SK-N-SH (cell line): ENCODE measurements at regions of chr15 and their contacts with region 1.

Region 1: GRCh38 chr15:88904624-88905327 is 8.4 kb downstream of the MFGE8 start:
- DNase-seq: peak; percentile 84
- H3K4me3 ChIP-seq: no peak overlapping the region; a peak in 1 of 4 replicates
- H3K27ac ChIP-seq: no peak overlapping the region
- H3K4me1 ChIP-seq: no peaks in the 10 kb centered on the region; a peak in 1 of 4 replicates
- H3K27me3 ChIP-seq: no peaks in the 10 kb centered on the region
- CTCF ChIP-seq: peak; percentile 98
- EP300 ChIP-seq: no peak
- RAD21 ChIP-seq: peak; percentile 88

Region 2: GRCh38 chr15:88348579-88349230 is 556.1 kb before region 1 on chr15:
- CTCF ChIA-PET with region 1: no interaction called
- POLR2A ChIA-PET with region 1: no interaction called
- DNase-seq: no peak
- H3K4me3 ChIP-seq: no peak overlapping the region
- H3K27ac ChIP-seq: no peak overlapping the region
- H3K4me1 ChIP-seq: peaks cover 0 to 3% of the 10 kb centered on the region in 2 experiments; a peak in 2 of 4 replicates
- H3K27me3 ChIP-seq: no peaks in the 10 kb centered on the region
- CTCF ChIP-seq: no peak
- EP300 ChIP-seq: no peak
- RAD21 ChIP-seq: no peak

Region 3: GRCh38 chr15:88878720-88879184 is 26.0 kb before region 1 on chr15:
- CTCF ChIA-PET with region 1: interaction called, 11 read pairs
- POLR2A ChIA-PET with region 1: no interaction called
- DNase-seq: peak; percentile 85
- H3K4me3 ChIP-seq: no peak overlapping the region
- H3K27ac ChIP-seq: no peak overlapping the region
- H3K4me1 ChIP-seq: no peaks in the 10 kb centered on the region
- H3K27me3 ChIP-seq: no peaks in the 10 kb centered on the region; the same call in 1 of the 2 replicates
- CTCF ChIP-seq: peak; percentile 73
- EP300 ChIP-seq: no peak
- RAD21 ChIP-seq: peak; percentile 66

Region 4: GRCh38 chr15:88920186-88920891 is 15.6 kb after region 1 on chr15:
- CTCF ChIA-PET with region 1: interaction called, 18 read pairs
- POLR2A ChIA-PET with region 1: no interaction called
- DNase-seq: no peak
- H3K4me3 ChIP-seq: no peak overlapping the region
- H3K27ac ChIP-seq: peak overlapping the region in 1 of 2 experiments; percentile 51; a peak in 1 of 4 replicates
- H3K4me1 ChIP-seq: peaks cover 0 to 12% of the 10 kb centered on the region in 2 experiments; a peak in 1 of 4 replicates
- H3K27me3 ChIP-seq: no peaks in the 10 kb centered on the region
- CTCF ChIP-seq: no peak
- EP300 ChIP-seq: no peak
- RAD21 ChIP-seq: no peak

Region 5: DNA sequence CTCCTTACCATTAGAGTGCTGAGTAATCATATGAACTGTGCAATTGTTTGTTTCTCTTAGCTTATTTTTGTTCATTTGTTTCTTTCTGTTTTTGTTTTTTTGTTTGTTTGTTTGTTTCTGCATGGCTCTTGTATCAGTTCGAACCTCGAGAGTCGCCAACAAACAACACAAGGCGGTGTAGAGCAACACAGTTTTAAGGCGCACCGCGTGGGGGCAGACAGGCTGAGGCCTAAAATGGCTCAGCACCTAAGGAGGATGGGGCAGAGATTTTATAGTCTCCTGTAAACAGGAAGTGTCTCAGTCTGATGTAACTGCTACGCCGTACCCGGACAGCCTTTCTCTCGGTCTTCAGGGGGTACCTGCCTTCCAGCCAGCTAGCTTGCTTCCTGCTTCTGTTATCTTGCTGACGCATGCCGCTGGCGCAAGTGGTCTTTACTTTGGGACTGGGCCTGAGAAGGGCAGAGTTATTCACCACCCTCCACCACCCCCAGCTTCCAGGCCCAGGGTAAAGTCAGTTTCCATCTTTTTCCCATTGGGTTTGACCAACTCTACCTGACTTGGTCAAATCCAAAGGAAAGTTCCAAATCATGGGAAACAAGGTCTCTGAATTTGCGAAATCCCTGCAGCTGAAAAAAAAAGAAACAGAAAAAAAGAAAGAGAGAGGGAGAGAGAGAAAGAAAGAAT is 34.2 kb after region 1 on chr15:
- CTCF ChIA-PET with region 1: interaction called, 10 read pairs
- POLR2A ChIA-PET with region 1: no interaction called
- DNase-seq: no peak
- H3K4me3 ChIP-seq: no peak overlapping the region
- H3K27ac ChIP-seq: no peak overlapping the region
- H3K4me1 ChIP-seq: no peaks in the 10 kb centered on the region
- H3K27me3 ChIP-seq: no peaks in the 10 kb centered on the region
- CTCF ChIP-seq: no peak
- EP300 ChIP-seq: no peak
- RAD21 ChIP-seq: no peak

Region 6: GRCh38 chr15:89003865-89004725 is 99.3 kb after region 1 on chr15:
- CTCF ChIA-PET with region 1: interaction called, 27 read pairs
- POLR2A ChIA-PET with region 1: no interaction called
- DNase-seq: peak; percentile 65
- H3K4me3 ChIP-seq: no peak overlapping the region
- H3K27ac ChIP-seq: no peak overlapping the region
- H3K4me1 ChIP-seq: peaks cover 6 to 7% of the 10 kb centered on the region in 2 experiments; a peak in 1 of 4 replicates
- H3K27me3 ChIP-seq: no peaks in the 10 kb centered on the region
- CTCF ChIP-seq: peak; percentile 43
- EP300 ChIP-seq: no peak
- RAD21 ChIP-seq: peak; percentile 59

Region 7: DNA sequence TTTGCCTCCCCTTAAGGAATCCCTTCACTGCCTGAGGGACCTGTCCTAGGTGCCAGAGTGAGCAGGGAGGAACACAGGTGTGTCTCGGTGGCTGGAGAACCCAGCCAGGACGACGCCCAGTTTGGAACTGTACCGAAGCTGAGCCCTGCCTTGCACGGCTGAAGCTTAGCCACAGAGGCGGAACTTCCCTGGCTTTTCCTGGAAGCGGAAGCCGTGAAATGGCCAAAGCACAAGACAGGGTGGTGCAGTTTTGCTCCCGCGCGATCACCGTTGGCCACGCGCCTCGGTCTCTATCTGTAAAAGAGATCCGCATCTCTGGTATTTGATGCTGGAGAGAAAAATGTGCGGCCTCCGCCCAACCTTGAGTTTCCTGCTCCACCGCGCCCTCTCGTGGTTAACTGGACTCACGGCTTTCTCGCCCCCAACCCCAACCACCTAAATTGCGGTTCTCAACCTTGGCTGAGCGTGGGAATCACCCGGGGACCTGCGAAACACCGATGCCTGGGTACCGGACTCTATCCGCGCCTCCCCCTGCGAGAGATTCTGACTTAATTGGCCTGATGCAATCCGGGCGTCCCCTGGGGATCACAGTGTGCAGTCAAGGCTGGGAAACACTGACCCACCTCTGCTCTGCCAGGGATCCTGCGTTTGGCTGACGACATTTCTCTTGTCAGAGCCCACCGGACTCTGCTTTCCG is 112.7 kb after region 1 on chr15:
- CTCF ChIA-PET with region 1: interaction called, 48 read pairs
- POLR2A ChIA-PET with region 1: interaction called, 7 read pairs
- DNase-seq: peak; percentile 84
- H3K4me3 ChIP-seq: peak overlapping the region; percentile 37 to 57
- H3K27ac ChIP-seq: no peak overlapping the region
- H3K4me1 ChIP-seq: peaks cover 0 to 11% of the 10 kb centered on the region in 2 experiments; a peak in 1 of 4 replicates
- H3K27me3 ChIP-seq: no peaks in the 10 kb centered on the region; the same call in 1 of the 2 replicates
- CTCF ChIP-seq: peak; percentile 95
- EP300 ChIP-seq: no peak
- RAD21 ChIP-seq: peak; percentile 77